Adrenal gland (tissue), 19 donors: ENCODE measurements at regions of chr15 and their contacts with region 1.

Region 1: GRCh38 chr15:31977812-31978661 is 52.3 kb upstream of the CHRNA7 start:
- DNase-seq: peak; percentile 22 to 75 (median 51)
- H3K4me3 ChIP-seq: no peak overlapping the region
- H3K27ac ChIP-seq: no peak overlapping the region
- H3K4me1 ChIP-seq: no peaks in the 10 kb centered on the region
- H3K27me3 ChIP-seq: peaks cover 14% of the 10 kb centered on the region
- CTCF ChIP-seq: peak; percentile 52 to 80 (median 72)
- POLR2A ChIP-seq: no peak

Region 2: DNA sequence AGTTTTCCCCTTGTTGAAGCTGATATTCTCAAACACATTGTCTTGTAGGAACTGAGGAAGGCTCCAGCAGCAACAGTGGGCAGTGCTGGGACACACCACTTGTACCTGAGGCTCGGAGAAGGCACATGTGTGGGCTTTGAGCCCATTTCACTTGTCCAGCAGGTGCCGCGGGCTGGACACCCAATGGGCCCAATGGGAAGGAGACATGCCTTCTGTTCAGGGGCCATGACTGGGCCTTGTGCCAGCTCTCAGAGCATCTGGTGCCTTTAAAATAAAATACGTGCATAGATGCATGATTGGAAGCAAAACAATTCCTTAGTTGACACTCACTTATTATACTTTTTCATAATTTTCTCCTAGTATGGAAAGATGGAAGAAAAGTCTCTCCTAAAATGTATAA is 317.2 kb before region 1 on chr15:
- intact Hi-C with region 1: loop called in 1 of 2 experiments (anchors 10 kb)
- DNase-seq: no peak
- H3K4me3 ChIP-seq: no peak overlapping the region
- H3K27ac ChIP-seq: no peak overlapping the region
- H3K4me1 ChIP-seq: no peaks in the 10 kb centered on the region
- H3K27me3 ChIP-seq: no peaks in the 10 kb centered on the region
- CTCF ChIP-seq: no peak
- POLR2A ChIP-seq: no peak